Naive thymus-derived CD4-positive, alpha-beta T cell (primary cell): ENCODE measurements at regions of chr15 and their contacts with region 1.

Region 1: DNA sequence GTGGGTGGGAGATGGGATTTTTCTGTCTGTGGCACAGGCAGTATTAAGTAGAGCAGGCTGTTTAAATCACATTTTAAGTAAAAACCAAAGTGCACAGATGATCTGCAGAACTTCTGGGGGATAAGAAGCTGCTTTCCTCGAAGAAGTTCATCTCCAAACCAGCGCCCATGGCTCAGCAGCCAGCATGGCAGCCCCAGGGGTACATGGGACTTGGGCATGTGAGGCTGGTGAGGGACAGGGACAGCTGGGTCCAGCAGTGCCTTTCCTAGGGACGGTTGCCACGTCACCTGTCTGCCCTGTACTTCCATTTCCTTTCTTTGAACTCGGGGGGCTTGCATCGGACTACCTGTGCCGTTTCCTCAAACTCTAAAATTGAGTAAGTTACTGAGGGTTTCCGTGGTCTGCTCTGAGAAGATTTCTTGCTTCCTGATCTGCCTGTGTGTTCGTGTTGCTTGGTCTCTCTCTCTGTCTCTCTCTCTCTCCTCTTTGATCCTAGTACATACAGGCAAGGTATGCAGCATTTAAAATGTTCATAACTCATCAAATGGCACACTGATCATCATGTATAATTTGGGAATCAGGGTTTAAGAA is 67.6 kb downstream of the IGF1R start:
- DNase-seq: peak in 6 of 9 donors; percentile 17 to 40 (median 31)
- ATAC-seq: peak; percentile 45
- H3K4me3 ChIP-seq: peak overlapping the region; percentile 29
- H3K4me3 Mint-ChIP-seq: peak overlapping the region; percentile 29 to 78 (median 68)
- H3K27ac ChIP-seq: no peak overlapping the region
- H3K27ac Mint-ChIP-seq: peak overlapping the region; percentile 18 to 86 (median 69)
- H3K4me1 ChIP-seq: peaks cover 0 to 60% of the 10 kb centered on the region in 2 donors
- H3K4me1 Mint-ChIP-seq: peaks cover 48 to 94% (median 87%) of the 10 kb centered on the region in 7 donors
- H3K27me3 ChIP-seq: no peaks in the 10 kb centered on the region
- H3K27me3 Mint-ChIP-seq: no peaks in the 10 kb centered on the region

Region 2: GRCh38 chr15:98700519-98700918 is 15.4 kb before region 1 on chr15:
- CTCF ChIA-PET with region 1: no interaction called
- POLR2A ChIA-PET with region 1: no interaction called
- intact Hi-C with region 1: loop called in 1 of 2 experiments (anchors 2 kb)
- DNase-seq: no peak
- ATAC-seq: peak; percentile 18
- H3K4me3 ChIP-seq: no peak overlapping the region
- H3K4me3 Mint-ChIP-seq: peak overlapping the region in 6 of 10 donors; percentile 8 to 71 (median 60)
- H3K27ac ChIP-seq: no peak overlapping the region
- H3K27ac Mint-ChIP-seq: peak overlapping the region in 7 of 9 donors; percentile 34 to 83 (median 66)
- H3K4me1 ChIP-seq: peaks cover 0 to 56% of the 10 kb centered on the region in 2 donors
- H3K4me1 Mint-ChIP-seq: peaks cover 37 to 61% (median 56%) of the 10 kb centered on the region in 7 donors
- H3K27me3 ChIP-seq: peaks cover 0 to 3% of the 10 kb centered on the region in 2 donors
- H3K27me3 Mint-ChIP-seq: no peaks in the 10 kb centered on the region